Testis (tissue), 5 donors: ENCODE measurements at regions of chr10 and their contacts with region 1.

Region 1: GRCh38 chr10:121598207-121598862 is at the start of gene FGFR2:
- DNase-seq: peak; percentile 84
- H3K4me3 ChIP-seq: peak within 1 kb of the TSS; percentile 59 to 66
- H3K27ac ChIP-seq: peak within 1 kb of the TSS; percentile 82 to 83
- H3K4me1 ChIP-seq: peaks cover 10% of the 10 kb centered on the region
- H3K27me3 ChIP-seq: no peaks in the 10 kb centered on the region
- CTCF ChIP-seq: peak in 2 of 3 experiments; percentile 3 to 14
- POLR2A ChIP-seq: no peak
- total RNA-seq, gene FGFR2: 23.4 to 28.9 TPM

Region 2: GRCh38 chr10:120646738-120647456 is 951.4 kb before region 1 on chr10:
- intact Hi-C with region 1: no loop called
- DNase-seq: no peak
- H3K4me3 ChIP-seq: no peak overlapping the region
- H3K27ac ChIP-seq: no peak overlapping the region
- H3K4me1 ChIP-seq: peaks cover 3% of the 10 kb centered on the region
- H3K27me3 ChIP-seq: no peaks in the 10 kb centered on the region
- CTCF ChIP-seq: no peak
- POLR2A ChIP-seq: no peak

Region 3: DNA sequence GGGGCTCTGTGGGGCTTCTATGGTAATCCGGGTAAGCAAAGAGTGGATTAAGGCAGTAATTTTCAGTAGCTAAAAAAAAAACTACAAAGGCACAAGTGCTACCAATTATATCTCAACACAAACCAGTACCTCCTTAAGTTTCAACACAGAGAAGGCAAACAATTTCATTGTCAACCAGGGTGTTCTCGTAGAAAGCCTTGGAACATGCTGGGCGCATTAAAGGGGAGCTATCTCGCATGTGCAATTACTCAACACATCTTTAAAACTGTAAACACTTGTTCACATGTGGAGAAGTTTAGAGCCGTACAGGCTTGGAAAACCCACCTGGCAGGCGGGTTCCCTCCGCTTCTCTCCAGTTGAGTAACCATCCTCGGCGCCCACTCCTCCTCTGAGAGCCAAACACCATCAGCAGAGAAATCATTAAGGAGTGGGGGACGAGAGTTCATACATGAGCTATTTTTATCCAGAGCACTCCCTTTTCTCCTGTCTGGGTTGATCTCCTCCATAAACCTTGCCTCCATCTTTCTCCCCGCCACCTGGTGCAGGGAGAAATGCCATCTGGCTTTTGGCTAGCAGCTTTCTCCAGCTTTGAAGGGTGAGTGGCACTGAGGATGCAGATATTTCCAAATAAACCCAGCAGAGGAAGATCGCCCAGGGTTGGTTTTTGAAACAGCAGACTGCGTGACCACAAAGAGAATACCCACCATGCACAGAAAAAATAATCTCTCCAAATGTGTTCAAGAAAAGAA is 460.0 kb before region 1 on chr10:
- intact Hi-C with region 1: loop called (anchors 5 kb)
- DNase-seq: no peak
- H3K4me3 ChIP-seq: no peak overlapping the region
- H3K27ac ChIP-seq: no peak overlapping the region
- H3K4me1 ChIP-seq: peaks cover 8% of the 10 kb centered on the region
- H3K27me3 ChIP-seq: no peaks in the 10 kb centered on the region
- CTCF ChIP-seq: no peak
- POLR2A ChIP-seq: no peak